Activated naive CD4-positive, alpha-beta T cell treated with anti-CD3 and anti-CD28 coated beads for 36 hours (primary cell): ENCODE measurements at regions of chr1 and their contacts with region 1.

Region 1: DNA sequence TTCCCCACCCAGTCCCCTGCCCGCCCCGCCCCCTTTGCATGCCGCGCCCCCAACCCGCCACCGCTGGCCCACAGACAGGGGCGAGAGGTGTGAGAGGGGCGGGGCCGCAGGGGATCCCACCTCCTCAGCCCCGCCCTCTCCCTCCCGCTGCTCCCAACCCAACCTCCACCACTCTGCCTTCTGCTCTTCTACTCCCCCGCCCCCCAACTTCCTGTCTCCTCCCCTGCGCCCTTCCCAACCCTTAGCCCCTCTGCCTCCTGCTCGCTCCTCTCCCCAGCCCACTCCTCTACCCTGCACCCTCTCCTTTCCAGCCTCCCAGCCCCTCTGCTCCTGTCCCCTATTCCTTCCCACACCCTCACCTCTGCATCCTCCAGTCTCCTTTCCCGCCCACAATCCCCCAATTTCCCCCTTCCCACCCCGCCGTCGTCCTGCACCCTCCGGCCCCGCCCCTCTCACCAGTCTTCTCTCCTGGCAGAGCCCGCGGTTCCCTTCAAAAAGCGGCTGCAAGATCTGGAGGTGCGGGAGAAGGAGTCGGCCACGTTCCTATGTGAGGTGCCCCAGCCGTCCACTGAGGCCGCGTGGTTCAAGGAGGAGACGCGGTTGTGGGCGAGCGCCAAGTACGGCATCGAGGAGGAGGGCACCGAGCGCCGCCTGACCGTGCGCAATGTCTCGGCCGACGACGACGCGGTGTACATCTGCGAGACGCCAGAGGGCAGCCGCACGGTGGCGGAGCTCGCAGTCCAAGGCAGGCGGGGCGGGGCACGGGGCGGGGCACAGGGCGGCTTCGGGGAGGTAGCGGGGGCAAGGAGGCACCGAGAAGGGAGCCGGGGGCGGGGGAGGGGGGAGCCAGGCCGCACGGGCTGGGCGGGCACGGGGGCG is 5.4 kb downstream of the OBSCN start:
- DNase-seq: peak; percentile 92
- H3K4me3 Mint-ChIP-seq: peak overlapping the region; percentile 83
- H3K27ac Mint-ChIP-seq: peak overlapping the region; percentile 50
- H3K4me1 Mint-ChIP-seq: no peaks in the 10 kb centered on the region
- H3K27me3 Mint-ChIP-seq: no peaks in the 10 kb centered on the region

Region 2: DNA sequence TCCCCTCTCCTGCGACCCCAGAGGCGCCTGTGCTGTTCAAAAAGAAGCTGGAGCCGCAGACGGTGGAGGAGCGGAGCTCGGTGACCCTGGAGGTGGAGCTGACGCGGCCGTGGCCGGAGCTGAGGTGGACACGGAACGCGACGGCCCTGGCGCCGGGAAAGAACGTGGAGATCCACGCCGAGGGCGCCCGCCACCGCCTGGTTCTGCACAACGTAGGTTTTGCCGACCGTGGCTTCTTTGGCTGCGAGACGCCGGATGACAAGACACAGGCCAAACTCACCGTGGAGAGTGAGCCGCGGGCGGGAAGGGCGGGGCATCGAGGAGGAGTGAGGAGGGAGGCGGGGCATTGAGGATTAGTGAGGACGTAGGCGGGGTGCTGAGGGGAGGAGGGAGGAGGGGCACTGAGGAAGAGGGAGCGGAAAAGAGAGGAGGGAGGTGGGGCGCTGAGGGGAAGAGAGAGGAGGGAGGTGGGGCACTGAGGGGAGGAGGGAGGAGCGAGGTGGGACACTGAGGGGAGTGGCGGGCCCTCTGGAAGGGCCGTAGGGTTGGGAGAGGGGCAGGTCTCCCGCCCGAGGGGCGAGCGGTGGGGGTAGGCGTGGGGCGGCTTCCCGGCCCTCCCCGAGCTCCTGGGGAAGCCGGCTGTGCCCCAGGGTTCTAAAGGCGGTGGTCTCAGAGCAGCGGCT is 62.7 kb after region 1 on chr1:
- CTCF ChIA-PET with region 1: no interaction called
- intact Hi-C with region 1: loop called (anchors 2 kb)
- DNase-seq: peak; percentile 96
- H3K4me3 Mint-ChIP-seq: peak overlapping the region; percentile 72
- H3K27ac Mint-ChIP-seq: no peak overlapping the region
- H3K4me1 Mint-ChIP-seq: peaks cover 5% of the 10 kb centered on the region
- H3K27me3 Mint-ChIP-seq: no peaks in the 10 kb centered on the region